Colonic mucosa (tissue), 4 donors: ENCODE measurements at regions of chr2 and their contacts with region 1.

Region 1: DNA sequence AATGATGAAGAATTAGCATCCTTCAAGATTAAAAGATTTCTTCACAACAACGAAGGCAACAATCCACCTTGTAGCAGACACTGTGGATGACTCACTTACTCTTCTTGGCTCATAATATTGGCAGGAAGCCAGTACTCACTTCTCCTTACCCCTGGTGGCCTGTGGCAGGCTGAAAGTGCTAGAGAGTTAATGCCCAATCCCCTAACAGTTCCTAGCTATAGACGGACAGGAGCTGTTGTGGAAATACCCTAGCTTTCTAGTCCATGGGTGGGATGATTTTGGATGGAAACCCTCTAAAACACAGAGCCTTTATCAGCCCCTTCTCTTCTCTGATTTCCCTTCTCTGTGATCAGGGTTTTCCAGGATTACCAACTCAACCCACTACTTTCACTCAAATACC is 128.6 kb upstream of the NYAP2 start:
- DNase-seq: no peak
- H3K4me3 ChIP-seq: no peak overlapping the region
- H3K27ac ChIP-seq: no peak overlapping the region
- H3K4me1 ChIP-seq: no peaks in the 10 kb centered on the region
- H3K27me3 ChIP-seq: no peaks in the 10 kb centered on the region
- CTCF ChIP-seq: no peak

Region 2: GRCh38 chr2:225566798-225567197 is 295.9 kb after region 1 on chr2:
- intact Hi-C with region 1: loop called (anchors 10 kb)
- DNase-seq: no peak
- H3K4me3 ChIP-seq: no peak overlapping the region
- H3K27ac ChIP-seq: no peak overlapping the region
- H3K4me1 ChIP-seq: no peaks in the 10 kb centered on the region
- H3K27me3 ChIP-seq: no peaks in the 10 kb centered on the region
- CTCF ChIP-seq: no peak